RWPE1 (cell line): ENCODE measurements at regions of chr5 and their contacts with region 1.

Region 1: GRCh38 chr5:176447982-176448608 is at the start of gene FAF2:
- DNase-seq: peak; percentile 100
- H3K27ac ChIP-seq: peak within 1 kb of the TSS; percentile 97
- CTCF ChIP-seq: peak; percentile 100

Region 2: GRCh38 chr5:176415952-176416924 is 31.9 kb before region 1 on chr5 and contains the start of gene CLTB:
- CTCF ChIA-PET with region 1: interaction called, 31 read pairs
- POLR2A ChIA-PET with region 1: interaction called, 3 read pairs
- DNase-seq: peak; percentile 90
- H3K27ac ChIP-seq: peak within 1 kb of the TSS; percentile 99
- CTCF ChIP-seq: peak; percentile 99